ENCODE measurements at regions of chr7 and their contacts with region 1.

Region 1: GRCh38 chr7:100478966-100479665 is at the start of gene TSC22D4:
- DNase-seq: peak; percentile 93 to 97 (median 95)
- H3K4me3 ChIP-seq: peak within 1 kb of the TSS; percentile 81 to 95
- H3K4me3 Mint-ChIP-seq: peak within 1 kb of the TSS; percentile 82 to 99 (median 98)
- H3K27ac ChIP-seq: peak within 1 kb of the TSS; percentile 75
- H3K27ac Mint-ChIP-seq: peak within 1 kb of the TSS; percentile 75 to 99 (median 94)
- H3K4me1 ChIP-seq: peaks cover 58% of the 10 kb centered on the region
- H3K4me1 Mint-ChIP-seq: peaks cover 28 to 57% (median 38%) of the 10 kb centered on the region in 4 donors
- H3K27me3 ChIP-seq: no peaks in the 10 kb centered on the region
- H3K27me3 Mint-ChIP-seq: no peaks in the 10 kb centered on the region
- total RNA-seq, gene TSC22D4: 144 to 154 TPM

Region 2: DNA sequence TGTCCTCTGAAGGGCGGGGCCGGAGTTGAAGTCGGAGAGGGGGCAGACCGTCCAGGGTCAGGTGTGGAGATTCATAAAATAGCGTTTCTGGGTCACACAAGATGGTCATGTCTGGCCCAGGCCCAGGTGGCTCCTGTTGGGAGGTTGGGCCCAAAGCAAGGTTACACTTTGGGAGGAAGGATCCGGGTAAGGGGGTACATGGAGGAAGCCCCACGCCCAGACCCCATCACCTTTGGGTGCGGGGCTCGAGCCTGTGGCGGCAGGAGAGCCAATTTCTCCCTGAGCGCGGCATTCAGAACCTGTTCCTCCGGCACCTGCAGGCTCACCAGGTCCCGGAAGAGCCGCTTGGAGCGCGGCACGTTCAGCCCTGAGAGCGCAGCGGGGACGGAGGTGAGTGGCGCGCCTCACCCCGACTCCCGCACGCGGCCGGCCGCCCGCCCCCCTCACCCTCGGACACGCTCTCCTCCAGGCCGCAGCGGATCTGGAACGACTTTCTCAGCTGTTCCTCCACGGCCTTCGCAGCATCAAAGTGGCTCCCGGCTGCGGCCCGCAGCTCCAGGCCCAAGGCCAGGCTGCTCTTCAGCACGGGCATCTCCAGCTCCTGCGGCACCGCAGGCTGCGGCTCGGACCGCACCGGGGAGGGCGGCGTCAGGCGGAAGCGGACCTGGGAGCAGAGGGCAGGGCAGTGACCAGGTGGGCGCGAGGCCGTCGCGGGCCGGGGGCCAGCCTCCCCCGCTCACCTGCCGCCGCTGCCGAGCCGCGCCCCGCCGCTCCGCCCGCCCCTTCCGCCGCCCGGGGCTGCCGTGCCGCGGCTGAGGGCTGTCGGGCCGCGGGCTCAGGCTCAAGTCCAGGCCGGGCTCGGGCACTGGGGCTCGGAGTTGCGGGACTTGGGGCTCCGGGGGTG is 43.5 kb before region 1 on chr7:
- CTCF ChIA-PET with region 1: interaction called, 3 read pairs
- POLR2A ChIA-PET with region 1: interaction called, 49 read pairs
- intact Hi-C with region 1: loop called (anchors 1 kb)
- DNase-seq: peak; percentile 46 to 58 (median 53)
- H3K4me3 ChIP-seq: peak overlapping the region; percentile 78 to 95
- H3K4me3 Mint-ChIP-seq: peak overlapping the region; percentile 85 to 95 (median 92)
- H3K27ac ChIP-seq: peak overlapping the region; percentile 92
- H3K27ac Mint-ChIP-seq: peak overlapping the region; percentile 81 to 99 (median 94)
- H3K4me1 ChIP-seq: peaks cover 49% of the 10 kb centered on the region
- H3K4me1 Mint-ChIP-seq: peaks cover 24 to 55% (median 40%) of the 10 kb centered on the region in 4 donors
- H3K27me3 ChIP-seq: no peaks in the 10 kb centered on the region
- H3K27me3 Mint-ChIP-seq: no peaks in the 10 kb centered on the region

Region 3: DNA sequence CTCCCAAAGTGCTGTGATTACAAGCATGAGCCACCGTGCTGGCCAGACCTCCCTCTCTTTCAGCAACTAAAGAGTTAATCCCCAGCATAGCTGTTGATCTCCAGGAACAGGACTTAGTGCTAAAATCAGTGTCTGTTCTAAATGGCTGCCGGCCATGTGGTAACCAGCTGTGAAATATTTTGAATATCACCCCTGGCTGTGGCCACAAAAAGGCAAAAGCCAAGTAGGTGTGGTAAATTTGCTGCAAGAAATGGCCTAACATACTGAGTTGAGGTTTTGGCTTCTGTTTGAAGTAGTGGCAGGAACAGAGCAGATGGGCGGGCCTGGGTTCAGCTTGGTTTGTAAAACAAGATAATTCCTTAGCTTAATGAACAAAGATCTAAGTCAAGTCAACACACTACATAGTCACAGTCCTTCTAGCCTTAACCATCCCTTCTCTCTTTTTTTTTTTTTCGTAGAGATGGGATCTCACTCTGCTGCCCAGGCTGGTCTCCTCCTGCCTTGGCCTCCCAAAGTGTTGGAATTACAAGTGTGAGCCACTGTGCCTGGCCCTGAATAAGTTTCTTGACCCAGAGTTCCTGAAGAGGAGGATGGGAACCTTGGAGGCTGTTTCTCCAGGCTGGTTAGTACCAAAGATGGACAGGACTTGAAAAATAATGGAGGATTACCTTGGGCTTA is 37.2 kb after region 1 on chr7:
- CTCF ChIA-PET with region 1: interaction called, 5 read pairs
- POLR2A ChIA-PET with region 1: interaction called, 19 read pairs
- intact Hi-C with region 1: loop called (anchors 1 kb)
- DNase-seq: peak; percentile 74 to 82 (median 80)
- H3K4me3 ChIP-seq: peak overlapping the region in 1 of 2 donors; percentile 33
- H3K4me3 Mint-ChIP-seq: peak overlapping the region; percentile 61 to 83 (median 78)
- H3K27ac ChIP-seq: peak overlapping the region; percentile 24
- H3K27ac Mint-ChIP-seq: peak overlapping the region; percentile 72 to 89 (median 82)
- H3K4me1 ChIP-seq: peaks cover 30% of the 10 kb centered on the region
- H3K4me1 Mint-ChIP-seq: peaks cover 21 to 47% (median 28%) of the 10 kb centered on the region in 4 donors
- H3K27me3 ChIP-seq: no peaks in the 10 kb centered on the region
- H3K27me3 Mint-ChIP-seq: no peaks in the 10 kb centered on the region

Region 4: GRCh38 chr7:100545360-100546128 is 66.4 kb after region 1 on chr7:
- CTCF ChIA-PET with region 1: interaction called, 19 read pairs
- POLR2A ChIA-PET with region 1: interaction called, 121 read pairs
- intact Hi-C with region 1: no loop called
- DNase-seq: peak in 1 of 5 donors; percentile 84
- H3K4me3 ChIP-seq: peak overlapping the region; percentile 25 to 29
- H3K4me3 Mint-ChIP-seq: peak overlapping the region; percentile 69 to 97 (median 88)
- H3K27ac ChIP-seq: peak overlapping the region; percentile 66
- H3K27ac Mint-ChIP-seq: peak overlapping the region; percentile 61 to 98 (median 91)
- H3K4me1 ChIP-seq: peaks cover 99% of the 10 kb centered on the region
- H3K4me1 Mint-ChIP-seq: peaks cover 76 to 100% (median 89%) of the 10 kb centered on the region in 4 donors
- H3K27me3 ChIP-seq: no peaks in the 10 kb centered on the region
- H3K27me3 Mint-ChIP-seq: no peaks in the 10 kb centered on the region

Region 5: DNA sequence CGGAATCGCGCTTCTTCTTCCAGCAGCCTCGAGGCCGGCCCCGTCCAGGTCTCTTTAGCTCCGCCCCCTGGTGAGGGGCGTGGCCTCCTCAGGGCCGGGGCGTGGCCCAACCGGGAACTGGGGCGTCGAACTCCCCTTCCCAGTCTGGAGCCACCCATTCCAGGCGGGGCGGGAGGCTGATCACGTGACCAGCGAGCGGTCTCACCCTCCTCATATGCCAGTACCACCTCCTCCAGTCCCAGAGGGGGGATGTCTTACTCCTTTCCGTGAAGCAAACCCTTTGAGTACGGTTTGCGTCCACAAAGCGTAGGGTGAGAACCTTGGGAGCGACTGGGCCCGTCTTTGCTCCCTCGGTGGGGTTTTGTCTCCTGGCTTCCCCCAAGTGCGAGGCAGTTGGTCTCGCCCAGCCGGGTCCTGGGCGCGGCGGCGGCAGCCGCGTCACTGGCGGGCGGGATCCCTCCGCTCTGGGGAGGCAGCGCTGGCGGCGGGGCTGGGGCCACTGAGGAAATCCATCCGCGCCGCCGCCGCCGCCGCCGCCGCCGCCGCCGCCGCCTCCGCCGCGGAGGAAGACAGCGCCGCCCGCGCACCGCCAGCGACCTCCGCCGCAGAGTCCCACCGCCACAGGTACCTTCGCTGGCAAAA is 194.3 kb after region 1 on chr7 and contains the start of gene GNB2:
- CTCF ChIA-PET with region 1: no interaction called
- POLR2A ChIA-PET with region 1: no interaction called
- intact Hi-C with region 1: loop called (anchors 1 kb)
- DNase-seq: peak; percentile 97 to 98 (median 97)
- H3K4me3 ChIP-seq: peak within 1 kb of the TSS; percentile 80 to 91
- H3K4me3 Mint-ChIP-seq: peak within 1 kb of the TSS; percentile 94 to 99 (median 96)
- H3K27ac ChIP-seq: peak within 1 kb of the TSS; percentile 92
- H3K27ac Mint-ChIP-seq: peak within 1 kb of the TSS; percentile 96 to 99 (median 97)
- H3K4me1 ChIP-seq: peaks cover 30% of the 10 kb centered on the region
- H3K4me1 Mint-ChIP-seq: peaks cover 3 to 33% (median 14%) of the 10 kb centered on the region in 4 donors
- H3K27me3 ChIP-seq: no peaks in the 10 kb centered on the region
- H3K27me3 Mint-ChIP-seq: peaks cover 0 to 1% of the 10 kb centered on the region in 2 donors
- total RNA-seq, gene GNB2: 138 to 144 TPM

Measured in CD4-positive, alpha-beta memory T cell (primary cell).